Esophagus muscularis mucosa (tissue), 4 donors: ENCODE measurements at regions of chr4 and their contacts with region 1.

Region 1: GRCh38 chr4:137664046-137664387 is 131.7 kb upstream of the PCDH18 start:
- DNase-seq: no peak
- H3K4me3 ChIP-seq: peak overlapping the region in 3 of 4 donors; percentile 0 to 9 (median 4)
- H3K27ac ChIP-seq: peak overlapping the region; percentile 77 to 86 (median 83)
- H3K4me1 ChIP-seq: peaks cover 15 to 59% (median 50%) of the 10 kb centered on the region in 4 donors
- H3K27me3 ChIP-seq: no peaks in the 10 kb centered on the region
- CTCF ChIP-seq: no peak
- EP300 ChIP-seq: no peak
- POLR2A ChIP-seq: no peak

Region 2: GRCh38 chr4:137703195-137703594 is 39.2 kb after region 1 on chr4:
- intact Hi-C with region 1: loop called (anchors 5 kb)
- DNase-seq: no peak
- H3K4me3 ChIP-seq: no peak overlapping the region
- H3K27ac ChIP-seq: peak overlapping the region; percentile 42 to 70 (median 55)
- H3K4me1 ChIP-seq: peaks cover 5 to 68% (median 51%) of the 10 kb centered on the region in 4 donors
- H3K27me3 ChIP-seq: no peaks in the 10 kb centered on the region
- CTCF ChIP-seq: no peak
- EP300 ChIP-seq: no peak
- POLR2A ChIP-seq: no peak

Region 3: GRCh38 chr4:137754652-137755471 is 90.8 kb after region 1 on chr4:
- intact Hi-C with region 1: no loop called
- DNase-seq: no peak
- H3K4me3 ChIP-seq: no peak overlapping the region
- H3K27ac ChIP-seq: no peak overlapping the region
- H3K4me1 ChIP-seq: peaks cover 0 to 8% (median 8%) of the 10 kb centered on the region in 4 donors
- H3K27me3 ChIP-seq: no peaks in the 10 kb centered on the region
- CTCF ChIP-seq: no peak
- EP300 ChIP-seq: no peak
- POLR2A ChIP-seq: no peak